ENCODE measurements at regions of chr1 and their contacts with region 1.

Region 1: DNA sequence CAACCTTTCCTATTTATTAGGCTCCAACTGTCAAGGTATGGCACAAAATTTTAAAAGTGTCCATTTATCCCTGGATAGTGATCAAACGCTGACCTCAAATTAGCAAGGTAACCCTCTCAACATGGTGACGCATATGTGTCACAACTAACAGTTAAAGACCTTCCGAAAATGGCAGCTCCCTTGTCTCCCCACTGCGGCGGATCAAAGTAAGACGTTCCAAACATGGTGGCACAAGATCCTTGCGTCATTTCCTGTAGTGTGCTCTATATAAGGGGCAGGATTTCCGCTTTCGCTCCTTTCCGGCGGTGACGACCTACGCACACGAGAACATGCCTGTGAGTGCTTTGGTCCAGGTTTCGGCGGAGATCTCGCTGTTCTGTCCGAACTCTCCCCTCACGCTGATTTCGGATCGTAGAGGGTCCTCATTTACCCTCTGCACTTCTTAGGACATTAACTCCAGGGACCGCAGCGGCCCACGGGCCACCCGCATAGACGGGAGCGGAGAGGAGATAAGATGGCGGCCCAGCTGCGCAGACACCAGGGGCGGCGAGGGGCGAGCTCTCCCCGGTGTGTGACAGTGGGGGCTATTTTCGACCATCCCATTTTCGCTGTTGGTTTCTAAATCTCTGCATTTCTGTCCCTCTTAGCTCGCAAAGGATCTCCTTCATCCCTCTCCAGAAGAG is at the start of gene RPS27:
- DNase-seq: peak; percentile 97
- ATAC-seq: peak; percentile 82
- H3K4me3 ChIP-seq: peak within 1 kb of the TSS; percentile 86
- H3K27ac ChIP-seq: peak within 1 kb of the TSS; percentile 96
- H3K4me1 ChIP-seq: peaks cover 9% of the 10 kb centered on the region
- H3K27me3 ChIP-seq: no peaks in the 10 kb centered on the region
- CTCF ChIP-seq: no peak
- EP300 ChIP-seq: no peak
- POLR2A ChIP-seq: peak; percentile 100
- RAD21 ChIP-seq: no peak
- polyA plus RNA-seq, gene RPS27: 9,903 to 14,234 TPM

Region 2: DNA sequence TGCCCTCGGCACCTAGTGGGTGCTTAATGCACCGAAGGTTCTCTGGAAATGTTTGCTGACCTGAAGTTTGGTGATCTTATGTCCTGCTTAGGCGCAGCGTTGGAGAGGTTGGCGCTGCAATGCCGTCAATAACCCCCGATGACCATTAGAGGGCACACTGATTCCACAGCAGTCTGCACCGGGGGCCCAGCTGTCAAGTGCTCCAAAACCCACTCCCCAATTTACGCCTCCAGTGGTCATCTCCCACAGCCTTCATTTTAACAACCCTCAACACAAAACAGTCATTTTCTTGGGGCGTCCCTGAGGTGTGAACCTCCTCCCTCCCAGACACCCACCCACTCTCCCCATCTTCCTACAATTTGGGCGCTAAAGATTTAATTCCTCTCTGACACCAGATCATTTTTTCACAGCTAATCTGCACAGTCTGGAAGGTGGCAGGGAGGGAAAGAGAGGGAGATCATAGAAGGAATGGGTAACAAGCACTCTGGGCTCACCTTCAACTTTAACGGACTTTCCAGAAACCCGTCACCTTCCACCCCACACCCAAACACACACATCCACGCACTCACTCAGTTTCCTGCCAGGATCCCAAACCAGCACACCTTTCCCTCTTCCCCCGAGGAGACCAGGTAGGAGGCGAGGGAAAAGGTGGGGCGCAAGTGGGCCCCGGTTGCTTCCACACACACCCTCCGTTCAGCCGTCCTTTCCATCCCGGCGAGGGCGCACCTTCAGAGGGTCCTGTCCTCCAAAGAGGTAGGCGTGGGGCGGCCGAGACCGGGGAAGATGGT is 312.7 kb before region 1 on chr1:
- CTCF ChIA-PET with region 1: interaction called, 32 read pairs
- POLR2A ChIA-PET with region 1: no interaction called
- RAD21 ChIA-PET with region 1: interaction called, 14 read pairs
- SMC1A ChIA-PET with region 1: interaction called, 12 read pairs
- in situ Hi-C with region 1: loop called (anchors 5 kb)
- intact Hi-C with region 1: loop called (anchors 2 kb)
- DNase-seq: no peak
- ATAC-seq: peak; percentile 75
- H3K4me3 ChIP-seq: peak overlapping the region; percentile 47; the same call in 1 of the 2 replicates
- H3K27ac ChIP-seq: no peak overlapping the region
- H3K4me1 ChIP-seq: peaks cover 16% of the 10 kb centered on the region
- H3K27me3 ChIP-seq: peaks cover 14 to 23% of the 10 kb centered on the region in 2 experiments
- CTCF ChIP-seq: peak; percentile 94 to 95 (median 95)
- EP300 ChIP-seq: no peak
- POLR2A ChIP-seq: no peak
- RAD21 ChIP-seq: peak; percentile 90

Region 3: GRCh38 chr1:153796791-153797659 is 193.6 kb before region 1 on chr1:
- CTCF ChIA-PET with region 1: interaction called, 85 read pairs
- POLR2A ChIA-PET with region 1: interaction called, 4 read pairs
- RAD21 ChIA-PET with region 1: interaction called, 20 read pairs
- SMC1A ChIA-PET with region 1: interaction called, 46 read pairs
- in situ Hi-C with region 1: loop called (anchors 10 kb)
- intact Hi-C with region 1: loop called (anchors 1 kb)
- DNase-seq: no peak
- ATAC-seq: peak; percentile 93
- H3K4me3 ChIP-seq: no peak overlapping the region
- H3K27ac ChIP-seq: no peak overlapping the region
- H3K4me1 ChIP-seq: peaks cover 6% of the 10 kb centered on the region
- H3K27me3 ChIP-seq: no peaks in the 10 kb centered on the region
- CTCF ChIP-seq: peak; percentile 81 to 90 (median 86)
- EP300 ChIP-seq: no peak
- POLR2A ChIP-seq: no peak
- RAD21 ChIP-seq: peak; percentile 88

Region 4: GRCh38 chr1:153827168-153827964 is 163.2 kb before region 1 on chr1:
- CTCF ChIA-PET with region 1: interaction called, 11 read pairs
- POLR2A ChIA-PET with region 1: no interaction called
- RAD21 ChIA-PET with region 1: interaction called, 12 read pairs
- SMC1A ChIA-PET with region 1: interaction called, 6 read pairs
- in situ Hi-C with region 1: no loop called
- intact Hi-C with region 1: no loop called
- DNase-seq: no peak
- ATAC-seq: peak; percentile 64
- H3K4me3 ChIP-seq: no peak overlapping the region
- H3K27ac ChIP-seq: peak overlapping the region; percentile 52
- H3K4me1 ChIP-seq: peaks cover 10% of the 10 kb centered on the region
- H3K27me3 ChIP-seq: no peaks in the 10 kb centered on the region
- CTCF ChIP-seq: 0 out of 6 replicates have a peak, but pooled peaks of 1 of the 3 experiments have one; percentile 11
- EP300 ChIP-seq: no peak
- POLR2A ChIP-seq: no peak
- RAD21 ChIP-seq: no peak

Region 5: DNA sequence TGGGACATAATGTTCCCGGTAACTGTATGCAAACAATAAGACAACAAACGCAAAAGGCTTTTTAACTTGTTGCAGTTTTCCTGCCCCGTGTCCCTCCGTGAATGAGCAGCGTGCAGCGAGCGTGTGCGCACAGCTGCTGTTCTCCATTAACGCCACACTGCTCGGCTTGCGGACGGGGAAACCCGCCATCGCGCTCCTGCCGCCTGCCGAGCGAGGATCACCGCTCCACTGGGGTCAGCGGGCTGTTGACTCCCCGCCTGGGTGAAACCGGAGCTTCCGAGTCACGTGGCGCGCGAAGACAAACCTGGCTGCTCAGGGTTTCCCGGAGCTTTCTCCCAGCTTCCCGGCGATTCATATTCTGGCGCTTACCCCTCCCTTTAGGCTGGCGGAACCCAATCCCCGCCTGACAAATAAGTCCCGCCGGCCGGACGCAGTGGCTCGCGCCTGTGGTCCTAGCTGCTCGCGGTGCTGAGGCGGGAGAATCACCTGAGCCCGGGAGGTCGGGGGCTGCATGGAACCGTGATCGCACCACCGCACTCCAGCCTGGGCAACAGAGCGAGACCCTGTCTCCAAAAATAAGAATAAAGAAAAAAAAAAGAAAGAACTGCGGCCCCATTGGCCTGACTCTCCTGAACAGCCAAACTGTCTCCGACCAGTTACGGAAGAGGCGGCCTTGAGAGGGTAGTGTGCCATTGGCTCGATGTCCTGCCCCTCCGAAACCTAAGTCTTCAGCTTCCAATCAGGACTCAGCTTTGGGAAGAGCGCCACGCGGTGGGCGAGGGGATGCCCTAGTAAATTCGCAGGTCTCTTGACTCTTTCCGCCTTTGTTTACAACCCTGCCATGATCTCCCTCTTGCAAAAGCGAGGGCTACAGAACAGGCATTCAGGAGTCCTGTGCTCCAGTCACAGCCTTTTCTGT is 23.3 kb before region 1 on chr1 and contains the start of gene CREB3L4:
- CTCF ChIA-PET with region 1: interaction called, 64 read pairs
- POLR2A ChIA-PET with region 1: interaction called, 17 read pairs
- RAD21 ChIA-PET with region 1: interaction called, 42 read pairs
- SMC1A ChIA-PET with region 1: interaction called, 31 read pairs
- in situ Hi-C with region 1: no loop called
- intact Hi-C with region 1: no loop called
- DNase-seq: peak; percentile 95
- ATAC-seq: peak; percentile 88
- H3K4me3 ChIP-seq: peak within 1 kb of the TSS; percentile 92
- H3K27ac ChIP-seq: peak within 1 kb of the TSS; percentile 91
- H3K4me1 ChIP-seq: peaks cover 15% of the 10 kb centered on the region
- H3K27me3 ChIP-seq: no peaks in the 10 kb centered on the region
- CTCF ChIP-seq: peak; percentile 25 to 63 (median 55); a peak in 5 of 6 replicates
- EP300 ChIP-seq: no peak; a peak in 1 of 4 replicates
- POLR2A ChIP-seq: peak; percentile 90
- RAD21 ChIP-seq: peak; percentile 26; the same call in 1 of the 2 replicates
- polyA plus RNA-seq, gene CREB3L4: 9.7 to 12.9 TPM

Region 6: DNA sequence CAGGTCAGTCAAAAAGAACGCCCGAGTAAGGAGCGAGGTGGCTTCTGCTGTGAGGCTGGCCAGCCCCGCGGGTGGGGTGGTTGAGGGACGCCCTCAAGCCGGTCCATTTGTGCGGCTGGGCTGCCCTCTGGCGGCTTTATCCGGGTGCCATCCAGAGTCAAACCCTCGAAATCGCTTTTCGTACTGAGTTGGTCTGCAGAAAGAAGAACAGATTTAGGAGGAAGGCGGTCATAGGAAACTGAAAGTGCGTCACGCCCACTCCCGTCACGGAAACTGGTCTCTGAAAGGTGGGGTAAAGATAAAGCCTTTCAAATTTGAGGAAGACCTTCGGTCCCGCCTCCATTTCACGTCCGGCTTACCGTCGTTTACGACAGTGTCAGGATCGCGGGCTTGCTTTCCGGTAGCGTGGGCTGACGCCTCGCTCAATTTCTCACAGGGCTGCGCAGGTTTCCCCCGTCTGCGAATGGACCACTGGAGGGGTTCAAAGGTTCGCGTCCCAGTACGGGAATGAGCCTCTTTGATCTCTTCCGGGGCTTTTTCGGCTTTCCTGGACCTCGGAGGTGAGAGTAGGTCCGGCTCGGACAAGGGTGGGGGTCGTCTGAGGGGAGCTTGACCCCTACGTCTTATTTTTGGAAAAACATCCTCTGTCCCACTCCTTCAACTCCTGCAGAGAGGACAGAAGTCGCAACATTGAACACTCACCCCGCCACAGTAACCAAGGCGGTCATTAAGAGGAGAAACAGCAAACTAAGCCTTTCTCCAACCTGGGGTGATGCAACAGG is 281.8 kb after region 1 on chr1 and contains the start of gene HAX1:
- CTCF ChIA-PET with region 1: interaction called, 4 read pairs
- POLR2A ChIA-PET with region 1: no interaction called
- RAD21 ChIA-PET with region 1: no interaction called
- SMC1A ChIA-PET with region 1: interaction called, 4 read pairs
- in situ Hi-C with region 1: loop called (anchors 5 kb)
- intact Hi-C with region 1: loop called (anchors 2 kb)
- DNase-seq: peak; percentile 100
- ATAC-seq: peak; percentile 96
- H3K4me3 ChIP-seq: peak within 1 kb of the TSS; percentile 99
- H3K27ac ChIP-seq: peak within 1 kb of the TSS; percentile 89
- H3K4me1 ChIP-seq: peaks cover 10% of the 10 kb centered on the region
- H3K27me3 ChIP-seq: no peaks in the 10 kb centered on the region
- CTCF ChIP-seq: peak; percentile 76 to 93 (median 84); a peak in 5 of 6 replicates
- EP300 ChIP-seq: peak in 1 of 2 experiments; percentile 64; a peak in 2 of 4 replicates
- POLR2A ChIP-seq: peak; percentile 86
- RAD21 ChIP-seq: peak; percentile 88
- polyA plus RNA-seq, gene HAX1: 249 to 288 TPM

Measured in GM12878 (cell line).